WTC11 (cell line): ENCODE measurements at regions of chr1 and their contacts with region 1.

Region 1: DNA sequence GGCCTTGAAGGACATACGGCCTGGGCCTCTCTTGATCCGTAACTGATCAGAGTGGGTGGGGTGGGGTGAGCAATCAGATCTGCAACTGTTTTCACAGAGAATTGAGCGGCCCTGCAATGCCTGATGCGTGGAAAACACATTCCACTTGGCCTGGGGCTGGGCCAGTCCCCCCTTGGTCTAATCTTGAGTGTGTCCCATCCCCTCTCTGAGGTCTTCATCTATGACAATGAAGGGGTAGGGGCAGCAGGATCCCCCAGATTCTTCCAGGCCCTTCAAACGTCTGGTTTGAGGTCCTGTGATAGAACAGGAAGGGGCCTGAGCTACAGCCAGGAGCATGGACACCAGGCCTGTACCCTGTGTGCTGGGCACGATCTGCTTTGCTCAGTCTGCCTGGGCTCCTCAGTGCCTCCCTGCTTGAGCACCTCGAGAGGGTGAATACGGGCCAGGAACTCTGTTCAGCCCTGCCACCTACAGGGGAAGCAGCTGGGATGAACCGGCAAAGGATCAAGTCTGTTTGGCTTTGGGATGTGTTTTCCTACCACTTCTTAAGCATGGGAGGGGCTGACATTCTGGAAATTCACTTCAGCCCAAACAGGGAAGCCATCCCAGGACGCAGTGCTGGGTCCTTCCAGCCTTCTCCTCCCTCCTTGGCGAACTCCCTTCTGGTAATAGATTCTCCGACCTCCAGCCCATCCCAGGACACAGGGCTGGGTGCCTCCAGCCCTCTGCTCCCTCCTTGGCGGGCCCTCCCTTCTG is 56.0 kb upstream of the SELENON start:
- DNase-seq: peak; percentile 61
- ATAC-seq: peak; percentile 86
- H3K4me3 Mint-ChIP-seq: no peak overlapping the region
- H3K27ac Mint-ChIP-seq: peak overlapping the region; percentile 89; the same call in 1 of the 2 replicates
- H3K4me1 Mint-ChIP-seq: peaks cover 36% of the 10 kb centered on the region
- H3K27me3 Mint-ChIP-seq: no peaks in the 10 kb centered on the region
- CTCF ChIP-seq: no peak

Region 2: GRCh38 chr1:25725490-25726130 is 18.4 kb before region 1 on chr1:
- CTCF ChIA-PET with region 1: interaction called, 15 read pairs
- POLR2A ChIA-PET with region 1: no interaction called
- DNase-seq: no peak
- ATAC-seq: peak; percentile 12; the same call in 1 of the 2 replicates
- H3K4me3 Mint-ChIP-seq: no peak overlapping the region
- H3K27ac Mint-ChIP-seq: no peak overlapping the region
- H3K4me1 Mint-ChIP-seq: peaks cover 55% of the 10 kb centered on the region
- H3K27me3 Mint-ChIP-seq: no peaks in the 10 kb centered on the region
- CTCF ChIP-seq: no peak